WTC11 (cell line): ENCODE measurements at regions of chr14 and their contacts with region 1.

Region 1: DNA sequence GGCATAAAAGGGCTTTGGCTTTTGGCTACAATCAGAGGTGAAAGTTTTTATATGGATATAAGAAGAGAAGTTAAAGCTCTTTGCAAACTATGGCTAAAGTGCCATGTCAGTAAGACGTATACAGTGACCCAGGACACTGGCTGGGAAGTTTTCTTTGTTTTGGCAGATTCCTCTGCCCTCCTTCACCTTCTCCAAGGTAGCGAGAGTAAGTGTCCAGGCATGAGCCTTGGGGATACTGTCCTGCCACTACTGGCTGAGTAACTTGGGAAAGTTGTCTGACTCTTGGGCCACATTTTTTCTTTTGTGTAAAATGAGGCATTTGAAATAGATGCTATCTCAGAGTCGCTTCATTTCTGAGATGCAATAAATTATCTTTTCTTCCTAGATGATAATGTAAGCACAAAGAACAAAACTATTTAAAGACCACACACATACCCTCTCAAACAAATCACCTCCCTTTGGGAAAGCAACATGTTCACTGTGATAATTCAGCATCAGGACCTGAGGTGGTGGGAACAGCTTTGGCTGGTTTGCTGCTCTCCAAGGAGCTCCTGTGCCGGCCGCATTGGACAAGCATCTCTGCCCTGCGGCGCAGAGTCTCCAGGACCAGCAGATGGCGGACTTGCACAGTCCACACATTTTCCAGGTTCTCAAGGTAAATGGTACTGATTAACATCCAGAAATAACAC is 106.3 kb downstream of the PTCSC3 start:
- DNase-seq: peak; percentile 79
- ATAC-seq: peak; percentile 84
- H3K4me3 Mint-ChIP-seq: no peak overlapping the region
- H3K27ac Mint-ChIP-seq: 0 out of 2 replicates have a peak overlapping the region, but pooled peaks have one; percentile 74
- H3K4me1 Mint-ChIP-seq: peaks cover 5% of the 10 kb centered on the region
- H3K27me3 Mint-ChIP-seq: no peaks in the 10 kb centered on the region
- CTCF ChIP-seq: peak; percentile 39

Region 2: GRCh38 chr14:35046048-35046741 is 1024.0 kb before region 1 on chr14 and contains the start of gene FAM177A1:
- CTCF ChIA-PET with region 1: no interaction called
- POLR2A ChIA-PET with region 1: no interaction called
- DNase-seq: peak; percentile 98
- ATAC-seq: peak; percentile 98
- H3K4me3 Mint-ChIP-seq: peak within 1 kb of the TSS; percentile 89
- H3K27ac Mint-ChIP-seq: peak within 1 kb of the TSS; percentile 98
- H3K4me1 Mint-ChIP-seq: peaks cover 20% of the 10 kb centered on the region
- H3K27me3 Mint-ChIP-seq: no peaks in the 10 kb centered on the region; the same call in 1 of the 2 replicates
- CTCF ChIP-seq: no peak
- total RNA-seq, gene FAM177A1: 36.8 to 44.7 TPM (median 44.3 TPM) in 3 replicates

Region 3: GRCh38 chr14:35965400-35965799 is 104.8 kb before region 1 on chr14:
- CTCF ChIA-PET with region 1: interaction called, 17 read pairs
- POLR2A ChIA-PET with region 1: no interaction called
- DNase-seq: no peak
- ATAC-seq: no peak
- H3K4me3 Mint-ChIP-seq: no peak overlapping the region
- H3K27ac Mint-ChIP-seq: no peak overlapping the region
- H3K4me1 Mint-ChIP-seq: no peaks in the 10 kb centered on the region
- H3K27me3 Mint-ChIP-seq: no peaks in the 10 kb centered on the region
- CTCF ChIP-seq: no peak

Region 4: DNA sequence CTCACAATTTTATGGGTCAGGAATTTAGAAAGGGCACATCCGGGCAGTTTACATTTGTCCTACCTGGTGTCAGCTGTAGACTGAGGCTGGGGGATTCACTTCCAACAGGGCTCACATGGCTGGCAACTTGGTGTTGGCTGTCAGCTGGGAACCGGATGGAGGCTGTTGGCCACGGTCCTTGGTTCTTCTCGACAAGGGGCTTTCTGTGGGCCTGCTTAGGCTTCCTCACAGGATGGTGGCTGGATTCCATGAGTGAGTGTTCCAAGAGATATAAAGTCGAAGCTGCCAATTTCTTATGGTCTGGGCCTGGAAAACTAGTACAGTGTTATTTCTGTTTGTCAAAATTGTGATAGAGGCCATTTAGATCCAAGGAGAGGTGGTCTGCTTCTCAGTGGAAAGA is 21.5 kb before region 1 on chr14:
- CTCF ChIA-PET with region 1: interaction called, 16 read pairs
- POLR2A ChIA-PET with region 1: no interaction called
- DNase-seq: no peak
- ATAC-seq: no peak
- H3K4me3 Mint-ChIP-seq: no peak overlapping the region
- H3K27ac Mint-ChIP-seq: no peak overlapping the region
- H3K4me1 Mint-ChIP-seq: peaks cover 20% of the 10 kb centered on the region
- H3K27me3 Mint-ChIP-seq: no peaks in the 10 kb centered on the region
- CTCF ChIP-seq: no peak

Region 5: DNA sequence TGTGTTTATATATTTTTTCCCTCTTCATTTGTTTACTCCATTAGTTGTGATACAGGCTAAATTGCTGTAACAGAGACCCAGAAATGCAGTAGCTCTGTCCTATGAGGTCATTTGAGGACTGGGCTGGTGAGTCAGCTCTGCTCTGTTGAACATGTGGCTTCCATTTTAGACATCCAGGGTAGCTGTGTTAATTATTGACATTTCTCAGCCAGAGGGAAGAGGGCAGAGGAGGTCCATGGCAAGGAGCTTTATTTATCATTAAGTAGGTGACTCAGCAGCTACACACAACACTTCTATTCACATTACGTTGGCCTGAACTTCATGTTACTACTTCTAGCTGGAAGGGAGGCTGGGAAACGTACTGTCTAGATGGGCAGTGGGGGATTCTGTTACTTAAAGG is 20.9 kb after region 1 on chr14:
- CTCF ChIA-PET with region 1: interaction called, 19 read pairs
- POLR2A ChIA-PET with region 1: no interaction called
- DNase-seq: no peak
- ATAC-seq: no peak
- H3K4me3 Mint-ChIP-seq: no peak overlapping the region
- H3K27ac Mint-ChIP-seq: no peak overlapping the region
- H3K4me1 Mint-ChIP-seq: peaks cover 9% of the 10 kb centered on the region
- H3K27me3 Mint-ChIP-seq: peaks cover 3% of the 10 kb centered on the region; the same call in 1 of the 2 replicates
- CTCF ChIP-seq: no peak

Region 6: GRCh38 chr14:36161776-36162175 is 91.6 kb after region 1 on chr14:
- CTCF ChIA-PET with region 1: interaction called, 10 read pairs
- POLR2A ChIA-PET with region 1: no interaction called
- DNase-seq: peak; percentile 30
- ATAC-seq: peak; percentile 97
- H3K4me3 Mint-ChIP-seq: peak overlapping the region; percentile 48
- H3K27ac Mint-ChIP-seq: no peak overlapping the region
- H3K4me1 Mint-ChIP-seq: peaks cover 8% of the 10 kb centered on the region
- H3K27me3 Mint-ChIP-seq: peaks cover 44% of the 10 kb centered on the region
- CTCF ChIP-seq: no peak

Region 7: DNA sequence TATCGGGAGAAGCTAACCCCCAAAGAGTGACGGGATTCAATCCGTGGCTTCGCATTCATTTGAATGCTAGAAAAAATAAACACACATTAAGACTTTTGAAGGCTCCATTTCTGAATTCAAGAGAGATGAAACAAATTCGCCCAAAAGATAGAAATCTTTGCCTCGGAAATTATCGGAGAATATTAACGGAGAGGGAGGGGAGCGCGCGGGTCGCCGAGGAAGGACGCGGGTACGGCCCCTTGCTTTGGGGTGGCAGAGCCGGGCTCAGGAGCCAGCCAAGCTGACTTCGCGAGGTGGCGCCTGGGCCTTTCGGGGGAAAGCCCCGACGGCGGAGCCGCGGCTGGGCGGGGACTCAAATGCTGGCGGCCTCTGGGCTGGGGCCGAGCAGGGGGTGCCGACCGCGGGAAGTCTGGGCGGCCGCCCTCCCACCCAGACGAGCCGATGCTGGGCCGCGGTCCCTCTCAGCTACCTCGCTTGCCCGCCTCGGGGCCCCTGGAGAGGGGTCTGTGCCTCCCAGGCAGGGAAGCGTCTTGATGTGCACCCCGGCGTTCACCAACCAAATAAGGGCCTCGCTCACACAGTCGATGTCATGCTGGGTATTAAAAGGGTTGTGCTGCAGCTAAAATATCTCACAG is 435.1 kb after region 1 on chr14:
- CTCF ChIA-PET with region 1: interaction called, 20 read pairs
- POLR2A ChIA-PET with region 1: no interaction called
- DNase-seq: peak; percentile 60
- ATAC-seq: peak; percentile 30
- H3K4me3 Mint-ChIP-seq: peak overlapping the region; percentile 65
- H3K27ac Mint-ChIP-seq: no peak overlapping the region
- H3K4me1 Mint-ChIP-seq: peaks cover 56% of the 10 kb centered on the region
- H3K27me3 Mint-ChIP-seq: peaks cover 100% of the 10 kb centered on the region
- CTCF ChIP-seq: no peak

Region 8: GRCh38 chr14:36604757-36605505 is 534.8 kb after region 1 on chr14:
- CTCF ChIA-PET with region 1: interaction called, 22 read pairs
- POLR2A ChIA-PET with region 1: no interaction called
- DNase-seq: peak; percentile 60
- ATAC-seq: peak; percentile 83
- H3K4me3 Mint-ChIP-seq: peak overlapping the region; percentile 57
- H3K27ac Mint-ChIP-seq: no peak overlapping the region
- H3K4me1 Mint-ChIP-seq: peaks cover 12% of the 10 kb centered on the region
- H3K27me3 Mint-ChIP-seq: peaks cover 39% of the 10 kb centered on the region
- CTCF ChIP-seq: peak; percentile 48